ENCODE measurements at regions of chr1 and their contacts with region 1.

Region 1: GRCh38 chr1:159071970-159072582 is 4.5 kb downstream of the AIM2 start:
- DNase-seq: no peak
- ATAC-seq: no peak
- H3K4me3 Mint-ChIP-seq: no peak overlapping the region
- H3K27ac Mint-ChIP-seq: peak overlapping the region; percentile 39
- H3K4me1 Mint-ChIP-seq: peaks cover 59% of the 10 kb centered on the region
- H3K27me3 Mint-ChIP-seq: no peaks in the 10 kb centered on the region

Region 2: GRCh38 chr1:159056069-159056698 is 15.9 kb before region 1 on chr1:
- CTCF ChIA-PET with region 1: interaction called, 13 read pairs
- DNase-seq: no peak
- ATAC-seq: no peak
- H3K4me3 Mint-ChIP-seq: no peak overlapping the region
- H3K27ac Mint-ChIP-seq: peak overlapping the region; percentile 51
- H3K4me1 Mint-ChIP-seq: peaks cover 41% of the 10 kb centered on the region
- H3K27me3 Mint-ChIP-seq: no peaks in the 10 kb centered on the region

Region 3: GRCh38 chr1:159089184-159089791 is 17.2 kb after region 1 on chr1:
- CTCF ChIA-PET with region 1: interaction called, 39 read pairs
- DNase-seq: no peak
- ATAC-seq: no peak
- H3K4me3 Mint-ChIP-seq: no peak overlapping the region
- H3K27ac Mint-ChIP-seq: no peak overlapping the region
- H3K4me1 Mint-ChIP-seq: peaks cover 43% of the 10 kb centered on the region
- H3K27me3 Mint-ChIP-seq: no peaks in the 10 kb centered on the region

Region 4: GRCh38 chr1:159142391-159142663 is 70.3 kb after region 1 on chr1:
- CTCF ChIA-PET with region 1: no interaction called
- DNase-seq: no peak
- ATAC-seq: no peak
- H3K4me3 Mint-ChIP-seq: no peak overlapping the region
- H3K27ac Mint-ChIP-seq: no peak overlapping the region
- H3K4me1 Mint-ChIP-seq: no peaks in the 10 kb centered on the region
- H3K27me3 Mint-ChIP-seq: peaks cover 22% of the 10 kb centered on the region